ENCODE measurements at regions of chr17 and their contacts with region 1.

Region 1: DNA sequence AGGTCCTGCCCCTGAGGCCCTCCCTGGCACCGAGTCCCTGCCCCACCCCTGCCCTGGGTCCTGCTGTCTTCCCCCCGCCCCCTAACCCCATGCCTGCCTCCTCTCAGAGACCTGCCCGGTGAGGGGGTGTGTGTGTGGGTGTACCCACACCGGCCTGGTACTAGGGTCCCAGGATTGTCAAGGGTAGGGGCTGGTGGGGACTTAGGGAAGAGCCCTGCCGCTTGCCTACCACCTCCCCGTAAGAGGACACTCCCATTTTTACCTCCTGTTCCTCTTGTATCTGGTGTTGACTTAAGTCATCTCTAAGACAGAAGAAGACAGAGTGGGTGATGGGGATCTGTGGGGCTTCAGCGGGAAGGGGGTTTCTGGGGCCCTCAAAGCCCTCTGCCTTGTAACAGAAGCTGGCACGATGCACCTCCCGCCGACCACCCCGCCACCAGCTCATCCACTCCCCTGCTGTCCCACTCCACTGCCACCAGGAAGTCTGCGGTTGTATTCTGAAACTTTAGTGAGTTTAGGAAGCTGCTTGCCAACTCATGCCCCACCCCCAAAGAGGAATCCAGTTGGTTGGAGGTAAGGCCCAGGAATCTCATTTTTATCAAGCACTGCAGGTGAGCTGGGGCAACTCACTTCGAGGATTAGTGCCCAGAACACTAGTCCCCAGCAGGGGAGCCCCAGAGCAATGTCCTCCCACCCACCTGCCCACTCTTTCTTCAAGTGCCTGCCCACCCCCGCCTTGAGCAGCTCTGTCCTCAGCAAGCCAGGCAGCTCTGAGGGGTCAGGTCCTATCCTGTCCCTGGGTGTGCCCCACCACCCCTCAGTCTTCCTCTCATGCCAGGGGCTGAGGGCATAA is 5.6 kb downstream of the SPATA32 start:
- DNase-seq: no peak
- H3K4me3 Mint-ChIP-seq: no peak overlapping the region
- H3K27ac Mint-ChIP-seq: no peak overlapping the region
- H3K4me1 Mint-ChIP-seq: peaks cover 32% of the 10 kb centered on the region
- H3K27me3 Mint-ChIP-seq: no peaks in the 10 kb centered on the region

Region 2: GRCh38 chr17:44738214-44738906 is 518.0 kb before region 1 on chr17:
- CTCF ChIA-PET with region 1: no interaction called
- POLR2A ChIA-PET with region 1: no interaction called
- intact Hi-C with region 1: no loop called
- DNase-seq: no peak
- H3K4me3 Mint-ChIP-seq: no peak overlapping the region
- H3K27ac Mint-ChIP-seq: no peak overlapping the region
- H3K4me1 Mint-ChIP-seq: no peaks in the 10 kb centered on the region
- H3K27me3 Mint-ChIP-seq: no peaks in the 10 kb centered on the region

Region 3: DNA sequence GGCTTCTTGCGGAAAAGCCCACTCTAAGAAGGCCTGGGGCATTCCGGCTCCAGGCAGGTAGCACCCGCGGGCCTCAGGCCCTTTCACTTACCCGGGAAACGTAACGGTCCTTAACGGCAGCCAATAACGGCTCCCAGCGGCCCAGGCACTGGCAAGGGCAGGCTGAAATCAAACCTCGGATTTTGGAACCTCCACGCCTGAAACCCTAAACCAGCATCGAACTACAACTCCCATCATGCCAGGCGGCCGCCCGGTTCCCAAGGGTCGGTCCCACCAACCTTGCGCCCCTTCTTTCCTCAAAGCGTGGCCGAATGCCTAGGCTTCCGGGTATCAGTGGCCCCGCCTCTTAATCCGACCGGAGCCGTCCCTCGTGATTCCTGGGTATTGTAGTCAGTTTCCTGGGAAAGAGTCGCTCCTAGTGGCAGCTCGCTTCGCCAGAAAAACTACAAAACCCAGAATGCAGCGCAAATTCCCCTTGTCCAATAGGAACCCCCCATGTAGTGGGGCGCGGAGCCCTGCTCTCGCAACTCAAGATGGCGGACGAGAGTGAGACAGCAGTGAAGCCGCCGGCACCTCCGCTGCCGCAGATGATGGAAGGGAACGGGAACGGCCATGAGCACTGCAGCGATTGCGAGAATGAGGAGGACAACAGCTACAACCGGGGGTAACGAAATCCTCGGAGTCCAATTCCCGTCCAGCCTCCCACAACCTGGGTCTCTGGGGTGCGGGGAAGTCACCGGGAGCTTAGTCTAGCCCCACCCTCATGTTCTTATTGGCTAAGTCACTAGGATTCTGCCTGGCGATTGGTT is 195.3 kb before region 1 on chr17 and contains the start of gene NMT1:
- CTCF ChIA-PET with region 1: no interaction called
- POLR2A ChIA-PET with region 1: no interaction called
- intact Hi-C with region 1: no loop called
- DNase-seq: peak; percentile 98
- H3K4me3 Mint-ChIP-seq: peak within 1 kb of the TSS; percentile 100
- H3K27ac Mint-ChIP-seq: peak within 1 kb of the TSS; percentile 100
- H3K4me1 Mint-ChIP-seq: peaks cover 48% of the 10 kb centered on the region
- H3K27me3 Mint-ChIP-seq: no peaks in the 10 kb centered on the region
- total RNA-seq, gene NMT1: 158 TPM

Region 4: GRCh38 chr17:45235416-45236281 is 20.7 kb before region 1 on chr17:
- CTCF ChIA-PET with region 1: interaction called, 14 read pairs
- POLR2A ChIA-PET with region 1: no interaction called
- intact Hi-C with region 1: no loop called
- DNase-seq: peak; percentile 83
- H3K4me3 Mint-ChIP-seq: no peak overlapping the region
- H3K27ac Mint-ChIP-seq: peak overlapping the region; percentile 73
- H3K4me1 Mint-ChIP-seq: peaks cover 63% of the 10 kb centered on the region
- H3K27me3 Mint-ChIP-seq: no peaks in the 10 kb centered on the region

Region 5: DNA sequence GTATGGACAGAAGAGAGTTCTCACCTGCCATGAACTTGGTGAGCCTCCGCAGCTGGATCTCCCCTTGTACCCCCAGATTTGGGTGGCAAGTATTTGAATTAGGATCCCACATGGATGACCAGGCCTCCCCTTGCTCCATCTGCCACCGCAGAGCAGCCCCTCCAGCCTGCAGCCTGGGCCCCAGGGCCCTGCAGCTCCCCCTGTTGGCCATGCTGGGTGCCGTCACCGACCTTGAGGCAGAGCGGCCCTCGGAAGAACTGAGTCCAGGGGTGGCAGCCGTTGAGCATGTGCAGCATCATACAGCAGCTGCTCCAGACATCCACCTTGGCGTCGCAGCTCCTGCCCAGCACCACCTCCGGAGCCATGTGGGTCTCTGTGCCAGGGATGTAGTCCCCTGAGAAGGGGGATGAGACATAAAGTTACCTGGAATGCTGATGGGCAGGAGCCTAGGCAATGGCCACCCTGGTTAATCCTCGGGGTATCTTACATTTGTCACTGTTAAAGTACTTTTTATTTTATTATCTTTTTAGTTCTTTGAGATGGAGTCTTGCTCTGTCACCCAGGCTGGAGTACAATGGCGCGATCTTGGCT is 14.6 kb after region 1 on chr17:
- CTCF ChIA-PET with region 1: interaction called, 11 read pairs
- POLR2A ChIA-PET with region 1: interaction called, 3 read pairs
- intact Hi-C with region 1: no loop called
- DNase-seq: peak; percentile 64
- H3K4me3 Mint-ChIP-seq: no peak overlapping the region
- H3K27ac Mint-ChIP-seq: peak overlapping the region; percentile 8
- H3K4me1 Mint-ChIP-seq: peaks cover 16% of the 10 kb centered on the region
- H3K27me3 Mint-ChIP-seq: no peaks in the 10 kb centered on the region

Region 6: DNA sequence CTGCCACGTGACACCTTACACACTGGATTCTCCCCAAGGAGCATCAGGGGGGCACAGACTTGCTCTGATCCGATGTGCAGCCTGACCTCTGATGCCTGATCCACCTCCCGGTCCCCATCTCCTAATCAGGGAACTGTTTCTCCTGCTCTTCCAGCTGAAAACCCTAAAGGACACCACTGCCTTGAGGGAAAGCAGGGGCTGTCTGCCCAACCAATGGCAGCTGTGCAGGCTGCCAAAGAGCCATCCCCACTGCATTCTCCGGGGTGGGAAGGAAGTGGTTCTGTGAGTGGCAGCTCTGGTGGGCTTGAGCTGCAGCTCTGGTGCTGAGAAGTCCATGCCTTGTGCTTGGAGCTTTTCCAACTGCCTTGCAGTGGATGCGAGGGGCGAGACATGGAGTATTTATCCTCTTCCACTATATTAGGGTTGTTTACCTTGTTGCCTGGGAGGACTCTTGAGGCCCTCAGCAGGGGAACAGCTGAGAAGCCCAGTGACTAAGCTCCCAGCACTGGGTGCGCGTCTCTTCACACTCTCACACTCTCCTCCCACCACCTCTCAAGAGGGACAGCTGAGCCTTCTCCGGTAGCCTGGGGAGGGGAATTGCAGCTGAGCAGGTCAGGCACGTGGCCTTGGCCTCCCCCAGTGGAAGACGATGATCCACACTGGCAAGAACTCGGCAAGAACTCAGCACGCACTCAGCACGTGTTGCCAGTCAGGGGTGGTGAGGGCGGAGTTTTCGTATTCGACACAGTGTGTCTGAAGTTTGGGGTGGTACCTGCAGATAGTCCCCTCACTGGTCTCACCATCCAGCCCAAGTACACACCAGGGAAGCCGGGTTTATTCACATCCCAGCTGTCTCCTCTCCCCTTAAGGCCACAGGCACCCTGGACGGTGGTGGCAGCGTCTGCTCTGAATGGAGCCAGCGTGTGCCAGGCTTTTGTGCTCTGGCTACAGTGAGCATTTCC is 26.6 kb after region 1 on chr17:
- CTCF ChIA-PET with region 1: no interaction called
- POLR2A ChIA-PET with region 1: no interaction called
- intact Hi-C with region 1: no loop called
- DNase-seq: no peak
- H3K4me3 Mint-ChIP-seq: no peak overlapping the region
- H3K27ac Mint-ChIP-seq: peak overlapping the region; percentile 85
- H3K4me1 Mint-ChIP-seq: peaks cover 7% of the 10 kb centered on the region
- H3K27me3 Mint-ChIP-seq: no peaks in the 10 kb centered on the region

Region 7: GRCh38 chr17:45316434-45317111 is 60.2 kb after region 1 on chr17 and contains the start of gene MAP3K14:
- CTCF ChIA-PET with region 1: no interaction called
- POLR2A ChIA-PET with region 1: no interaction called
- intact Hi-C with region 1: no loop called
- DNase-seq: peak; percentile 70
- H3K4me3 Mint-ChIP-seq: peak within 1 kb of the TSS; percentile 93
- H3K27ac Mint-ChIP-seq: peak within 1 kb of the TSS; percentile 97
- H3K4me1 Mint-ChIP-seq: peaks cover 64% of the 10 kb centered on the region
- H3K27me3 Mint-ChIP-seq: no peaks in the 10 kb centered on the region
- total RNA-seq, gene MAP3K14: 62.9 to 65.0 TPM

Measured in activated CD4-positive, alpha-beta memory T cell treated with anti-CD3 and anti-CD28 coated beads for 36 hours (primary cell).